Vagina (tissue), 2 donors: ENCODE measurements at regions of chr17 and their contacts with region 1.

Region 1: GRCh38 chr17:58112970-58113631 is 29.9 kb downstream of the DYNLL2 start:
- DNase-seq: no peak
- H3K4me3 ChIP-seq: no peak overlapping the region
- H3K27ac ChIP-seq: no peak overlapping the region
- H3K4me1 ChIP-seq: no peaks in the 10 kb centered on the region
- H3K27me3 ChIP-seq: no peaks in the 10 kb centered on the region
- CTCF ChIP-seq: peak; percentile 79 to 92 (median 80)
- POLR2A ChIP-seq: no peak

Region 2: GRCh38 chr17:57761887-57762286 is 351.2 kb before region 1 on chr17:
- intact Hi-C with region 1: no loop called
- DNase-seq: no peak
- H3K4me3 ChIP-seq: no peak overlapping the region
- H3K27ac ChIP-seq: no peak overlapping the region
- H3K4me1 ChIP-seq: no peaks in the 10 kb centered on the region
- H3K27me3 ChIP-seq: no peaks in the 10 kb centered on the region
- CTCF ChIP-seq: no peak
- POLR2A ChIP-seq: no peak

Region 3: DNA sequence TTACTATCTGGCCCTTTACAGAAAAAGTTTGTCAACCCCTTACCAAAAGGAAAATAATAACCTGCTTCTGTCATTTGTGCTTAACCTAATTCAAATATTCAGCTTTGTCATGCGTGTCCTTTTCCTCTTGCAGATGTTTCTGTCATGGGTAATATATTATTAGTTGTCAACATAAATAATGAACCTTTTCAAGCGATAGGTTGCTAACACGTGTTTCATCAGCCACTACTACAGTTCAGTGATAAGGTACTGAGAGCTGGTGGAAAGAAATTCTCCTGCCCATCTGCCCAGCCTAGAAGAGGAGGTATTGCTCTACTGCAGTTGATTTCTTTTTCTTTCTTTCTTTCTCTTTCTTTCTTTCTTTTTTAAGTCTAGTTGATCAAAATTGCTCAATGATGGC is 94.1 kb before region 1 on chr17:
- intact Hi-C with region 1: loop called (anchors 10 kb)
- DNase-seq: no peak
- H3K4me3 ChIP-seq: no peak overlapping the region
- H3K27ac ChIP-seq: no peak overlapping the region
- H3K4me1 ChIP-seq: no peaks in the 10 kb centered on the region
- H3K27me3 ChIP-seq: no peaks in the 10 kb centered on the region
- CTCF ChIP-seq: no peak
- POLR2A ChIP-seq: no peak